ENCODE measurements at regions of chr17 and their contacts with region 1.

Region 1: DNA sequence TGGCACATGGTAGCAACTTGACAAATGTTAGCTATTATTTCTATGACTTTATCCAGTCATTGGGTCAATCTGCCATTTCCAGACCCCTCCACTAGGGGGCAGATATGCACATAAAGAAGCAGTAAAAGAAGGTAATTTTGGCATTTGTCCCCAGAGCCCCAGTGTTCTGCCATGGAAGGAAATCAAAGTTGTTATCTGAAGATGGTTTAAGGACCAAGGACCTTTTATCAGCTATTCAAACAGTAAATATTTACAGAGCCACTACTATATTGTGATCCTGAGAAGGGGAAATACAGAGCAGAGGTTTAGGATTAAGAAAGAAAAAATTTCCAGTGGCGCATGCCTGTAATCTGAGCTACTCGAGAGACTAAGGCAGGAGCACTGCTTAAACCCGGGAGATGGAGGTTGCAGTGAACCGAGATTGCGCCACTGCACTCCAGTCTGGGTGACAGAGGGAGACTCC is 20.0 kb downstream of the TRAF4 start:
- DNase-seq: peak; percentile 29
- H3K4me3 ChIP-seq: no peak overlapping the region
- CTCF ChIP-seq: peak; percentile 69

Region 2: GRCh38 chr17:28788100-28788499 is 24.3 kb after region 1 on chr17:
- CTCF ChIA-PET with region 1: interaction called, 91 read pairs
- POLR2A ChIA-PET with region 1: no interaction called
- DNase-seq: no peak
- H3K4me3 ChIP-seq: no peak overlapping the region
- CTCF ChIP-seq: no peak

Region 3: DNA sequence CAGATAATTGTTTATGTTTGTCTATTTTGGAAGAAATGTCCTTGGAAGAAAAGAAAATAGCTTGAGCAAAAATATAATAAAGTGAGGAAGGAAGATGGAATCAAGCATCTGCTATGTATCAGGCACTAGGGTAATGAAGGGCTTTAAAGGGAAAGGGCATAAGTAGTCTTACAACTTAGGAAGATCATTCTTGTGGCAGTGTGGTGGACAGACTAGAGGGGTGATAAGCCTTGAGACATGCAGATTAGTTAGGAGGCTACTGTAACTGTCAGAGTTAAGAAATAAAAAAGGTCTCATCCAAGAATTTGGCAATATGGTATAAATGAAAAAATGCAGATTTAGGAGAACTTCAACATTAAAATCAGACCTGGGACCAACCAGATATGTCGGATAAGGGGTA is 63.8 kb after region 1 on chr17:
- CTCF ChIA-PET with region 1: interaction called, 10 read pairs
- POLR2A ChIA-PET with region 1: no interaction called
- DNase-seq: no peak
- H3K4me3 ChIP-seq: no peak overlapping the region
- CTCF ChIP-seq: no peak

Region 4: DNA sequence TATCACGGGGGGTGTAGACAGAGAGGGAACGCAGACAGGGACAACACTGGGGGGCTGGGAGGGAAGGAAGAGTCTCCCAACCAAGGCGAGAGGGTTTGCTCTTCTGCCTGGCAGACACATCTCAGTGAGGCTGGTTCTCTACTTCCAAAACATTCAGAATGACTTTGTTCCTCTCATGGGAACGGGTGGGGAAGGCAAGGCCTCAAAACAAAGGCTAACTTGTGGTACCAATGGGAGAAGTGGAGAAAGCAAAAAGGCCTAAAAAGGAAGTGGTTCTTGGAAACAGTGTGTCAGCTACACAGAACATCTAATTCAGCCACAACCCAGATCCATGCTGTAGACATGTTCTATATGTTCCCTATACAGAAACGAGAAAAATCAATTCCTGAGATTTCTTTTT is 126.2 kb after region 1 on chr17:
- CTCF ChIA-PET with region 1: interaction called, 90 read pairs
- POLR2A ChIA-PET with region 1: no interaction called
- DNase-seq: no peak
- H3K4me3 ChIP-seq: no peak overlapping the region
- CTCF ChIP-seq: no peak

Region 5: GRCh38 chr17:28940675-28941074 is 176.8 kb after region 1 on chr17:
- CTCF ChIA-PET with region 1: interaction called, 15 read pairs
- POLR2A ChIA-PET with region 1: no interaction called
- DNase-seq: no peak
- H3K4me3 ChIP-seq: no peak overlapping the region
- CTCF ChIP-seq: no peak

Region 6: GRCh38 chr17:29283271-29283895 is 519.5 kb after region 1 on chr17:
- CTCF ChIA-PET with region 1: no interaction called
- POLR2A ChIA-PET with region 1: no interaction called
- DNase-seq: no peak
- H3K4me3 ChIP-seq: no peak overlapping the region
- CTCF ChIP-seq: no peak

Measured in AG04449 (cell line).